ENCODE measurements at regions of chr6 and their contacts with region 1.

Region 1: GRCh38 chr6:37005061-37005810 is at the start of gene FGD2:
- DNase-seq: peak; percentile 75
- ATAC-seq: peak; percentile 73
- H3K4me3 Mint-ChIP-seq: peak within 1 kb of the TSS; percentile 100
- H3K27ac Mint-ChIP-seq: peak within 1 kb of the TSS; percentile 92
- H3K4me1 Mint-ChIP-seq: peaks cover 84% of the 10 kb centered on the region
- H3K27me3 Mint-ChIP-seq: no peaks in the 10 kb centered on the region
- CTCF ChIP-seq: no peak
- total RNA-seq, gene FGD2: 362 and 435 TPM in 2 replicates

Region 2: GRCh38 chr6:36594029-36594815 is 411.0 kb before region 1 on chr6 and contains the start of gene SRSF3:
- CTCF ChIA-PET with region 1: no interaction called
- POLR2A ChIA-PET with region 1: interaction called, 5 read pairs
- intact Hi-C with region 1: loop called (anchors 10 kb)
- DNase-seq: peak; percentile 87
- ATAC-seq: peak; percentile 91
- H3K4me3 Mint-ChIP-seq: peak within 1 kb of the TSS; percentile 96
- H3K27ac Mint-ChIP-seq: peak within 1 kb of the TSS; percentile 99
- H3K4me1 Mint-ChIP-seq: peaks cover 51% of the 10 kb centered on the region
- H3K27me3 Mint-ChIP-seq: no peaks in the 10 kb centered on the region
- CTCF ChIP-seq: no peak
- total RNA-seq, gene SRSF3: 421 and 494 TPM in 2 replicates

Region 3: DNA sequence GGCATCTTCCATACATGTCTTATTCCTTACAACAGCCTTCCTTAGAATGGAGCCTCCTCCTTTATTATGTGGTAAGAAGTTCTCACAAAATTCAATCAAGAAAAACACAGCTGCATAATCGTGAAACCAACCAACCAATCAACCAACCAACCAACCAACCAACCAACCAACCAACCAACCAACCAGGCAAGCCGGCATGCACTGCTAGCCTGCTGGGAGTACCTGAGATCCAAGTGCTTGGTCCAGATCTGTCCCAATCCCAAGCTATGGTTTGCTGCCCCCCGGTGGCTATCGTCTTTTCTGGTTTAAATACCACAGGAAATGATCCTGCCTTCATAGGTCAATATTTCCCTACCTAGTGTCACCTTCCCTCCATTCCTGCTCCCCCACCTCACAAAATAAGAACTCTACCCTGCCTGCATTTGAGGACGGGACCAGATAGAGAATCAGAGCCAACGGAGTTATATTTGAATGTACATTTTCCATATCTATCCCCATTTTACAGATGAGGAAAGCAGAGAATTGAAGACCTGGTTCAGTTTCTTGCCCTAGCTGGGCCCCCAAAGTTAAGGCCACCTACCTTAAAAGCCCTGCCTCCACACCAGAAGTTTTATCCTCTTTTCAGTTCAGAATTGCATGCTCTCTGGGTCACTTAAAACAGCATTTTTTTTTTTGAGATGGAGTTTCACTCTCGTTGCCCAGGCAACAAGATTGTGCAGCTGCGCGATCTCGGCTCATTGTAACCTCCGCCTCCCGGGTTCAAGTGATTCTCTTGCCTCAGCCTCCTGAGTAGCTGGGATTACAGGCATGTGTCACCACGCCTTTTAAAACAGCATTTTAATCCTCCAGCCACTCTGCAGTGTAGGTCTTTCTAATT is 280.5 kb before region 1 on chr6:
- CTCF ChIA-PET with region 1: no interaction called
- POLR2A ChIA-PET with region 1: no interaction called
- intact Hi-C with region 1: no loop called
- DNase-seq: no peak
- ATAC-seq: peak; percentile 14
- H3K4me3 Mint-ChIP-seq: no peak overlapping the region
- H3K27ac Mint-ChIP-seq: peak overlapping the region; percentile 25
- H3K4me1 Mint-ChIP-seq: peaks cover 57% of the 10 kb centered on the region
- H3K27me3 Mint-ChIP-seq: no peaks in the 10 kb centered on the region
- CTCF ChIP-seq: no peak

Region 4: DNA sequence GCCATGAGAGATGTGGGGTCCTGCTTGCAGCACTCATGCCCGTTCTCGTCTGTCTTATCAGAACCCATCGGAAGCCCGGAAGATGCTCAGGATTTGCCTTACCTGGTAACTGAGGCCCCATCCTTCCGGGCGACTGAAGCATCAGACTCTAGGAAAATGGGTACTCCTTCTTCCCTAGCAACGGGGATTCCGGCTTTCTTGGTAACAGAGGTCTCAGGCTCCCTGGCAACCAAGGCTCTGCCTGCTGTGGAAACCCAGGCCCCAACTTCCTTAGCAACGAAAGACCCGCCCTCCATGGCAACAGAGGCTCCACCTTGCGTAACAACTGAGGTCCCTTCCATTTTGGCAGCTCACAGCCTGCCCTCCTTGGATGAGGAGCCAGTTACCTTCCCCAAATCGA is 42.4 kb before region 1 on chr6:
- CTCF ChIA-PET with region 1: interaction called, 5 read pairs
- POLR2A ChIA-PET with region 1: interaction called, 4 read pairs
- intact Hi-C with region 1: loop called (anchors 1 kb)
- DNase-seq: peak; percentile 74
- ATAC-seq: peak; percentile 80
- H3K4me3 Mint-ChIP-seq: peak overlapping the region; percentile 67
- H3K27ac Mint-ChIP-seq: peak overlapping the region; percentile 88
- H3K4me1 Mint-ChIP-seq: peaks cover 30% of the 10 kb centered on the region
- H3K27me3 Mint-ChIP-seq: no peaks in the 10 kb centered on the region
- CTCF ChIP-seq: no peak

Region 5: GRCh38 chr6:37018198-37019064 is 13.2 kb after region 1 on chr6:
- CTCF ChIA-PET with region 1: interaction called, 74 read pairs
- POLR2A ChIA-PET with region 1: interaction called, 67 read pairs
- intact Hi-C with region 1: loop called (anchors 1 kb)
- DNase-seq: peak; percentile 72
- ATAC-seq: peak; percentile 95
- H3K4me3 Mint-ChIP-seq: no peak overlapping the region
- H3K27ac Mint-ChIP-seq: peak overlapping the region; percentile 73
- H3K4me1 Mint-ChIP-seq: peaks cover 31% of the 10 kb centered on the region
- H3K27me3 Mint-ChIP-seq: no peaks in the 10 kb centered on the region
- CTCF ChIP-seq: peak; percentile 83

Region 6: DNA sequence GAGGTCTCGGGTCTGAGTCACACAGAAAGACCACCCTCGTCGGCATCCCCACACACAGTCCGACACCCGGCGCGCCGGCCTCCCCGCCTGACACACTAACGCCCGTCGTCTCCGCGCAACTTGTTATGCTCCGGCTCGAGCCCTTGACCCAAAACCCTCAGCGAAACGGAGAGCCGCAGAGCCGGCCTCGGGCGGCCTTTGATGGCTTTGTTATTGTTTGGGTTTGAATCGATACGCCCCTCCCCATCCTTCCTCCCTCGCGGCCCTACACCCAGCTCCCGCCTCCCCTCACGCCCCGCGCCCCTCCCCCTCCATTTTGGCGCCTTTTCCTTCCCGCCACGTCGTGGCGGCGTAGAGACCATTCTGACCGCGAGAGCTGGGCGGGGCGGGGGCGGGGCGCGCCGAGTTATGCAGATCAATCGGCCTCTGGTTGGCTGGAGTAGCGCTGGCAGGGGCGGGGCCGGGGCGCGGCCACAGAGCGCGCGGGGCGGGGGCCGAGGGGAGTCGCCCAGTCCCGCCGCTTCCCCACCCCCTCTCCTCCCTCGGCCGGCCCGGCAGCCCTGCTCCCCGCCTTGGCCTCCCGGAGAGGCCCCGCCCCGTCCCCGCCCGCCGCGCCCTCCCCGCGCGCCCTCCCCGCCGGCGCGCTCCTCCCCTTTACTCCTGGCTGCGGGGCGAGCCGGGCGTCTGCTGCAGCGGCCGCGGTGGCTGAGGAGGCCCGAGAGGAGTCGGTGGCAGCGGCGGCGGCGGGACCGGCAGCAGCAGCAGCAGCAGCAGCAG is 164.4 kb after region 1 on chr6 and contains the start of gene PIM1:
- CTCF ChIA-PET with region 1: interaction called, 4 read pairs
- POLR2A ChIA-PET with region 1: interaction called, 48 read pairs
- intact Hi-C with region 1: no loop called
- DNase-seq: peak; percentile 88
- ATAC-seq: peak; percentile 84
- H3K4me3 Mint-ChIP-seq: peak within 1 kb of the TSS; percentile 95
- H3K27ac Mint-ChIP-seq: peak within 1 kb of the TSS; percentile 96
- H3K4me1 Mint-ChIP-seq: peaks cover 47% of the 10 kb centered on the region
- H3K27me3 Mint-ChIP-seq: no peaks in the 10 kb centered on the region
- CTCF ChIP-seq: no peak
- total RNA-seq, gene PIM1: 272 and 283 TPM in 2 replicates

Region 7: GRCh38 chr6:37298958-37299357 is 293.7 kb after region 1 on chr6:
- CTCF ChIA-PET with region 1: no interaction called
- POLR2A ChIA-PET with region 1: no interaction called
- intact Hi-C with region 1: no loop called
- DNase-seq: no peak
- ATAC-seq: no peak
- H3K4me3 Mint-ChIP-seq: no peak overlapping the region
- H3K27ac Mint-ChIP-seq: no peak overlapping the region
- H3K4me1 Mint-ChIP-seq: peaks cover 8% of the 10 kb centered on the region
- H3K27me3 Mint-ChIP-seq: no peaks in the 10 kb centered on the region
- CTCF ChIP-seq: no peak

Region 8: DNA sequence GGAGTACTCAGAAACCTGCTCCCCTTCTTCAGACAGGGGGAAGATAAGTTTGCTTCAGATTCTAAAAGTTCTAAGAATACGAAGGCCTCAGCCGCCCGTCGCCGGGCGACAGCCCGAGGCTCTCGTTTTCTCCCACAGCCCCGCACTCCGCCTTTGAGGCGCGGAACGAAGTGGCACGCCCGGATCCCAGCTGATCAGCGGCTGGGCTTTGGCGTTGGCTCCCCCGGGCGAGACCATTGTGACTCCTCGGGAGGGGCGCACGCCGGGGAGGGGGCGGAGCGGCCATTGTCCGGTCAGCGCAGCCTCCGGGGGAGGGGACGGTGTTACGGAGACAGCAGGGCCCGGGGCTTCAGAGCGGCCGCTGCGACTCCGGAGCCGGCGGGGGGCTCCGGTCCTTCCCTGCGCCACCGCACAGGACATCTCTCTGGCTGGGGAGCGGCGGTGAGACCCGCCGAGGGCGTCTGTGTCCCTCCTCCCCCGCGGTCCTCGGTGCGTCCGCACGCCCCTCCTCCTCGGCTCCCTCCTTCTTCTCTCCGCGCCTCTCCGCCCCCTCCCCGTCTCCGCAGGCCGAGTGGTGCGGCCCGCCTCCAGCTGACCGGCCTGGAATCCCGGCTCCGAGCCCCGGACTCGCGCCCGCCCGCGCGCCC is 814.1 kb after region 1 on chr6 and contains the start of gene ZFAND3:
- CTCF ChIA-PET with region 1: no interaction called
- POLR2A ChIA-PET with region 1: interaction called, 8 read pairs
- intact Hi-C with region 1: loop called (anchors 5 kb)
- DNase-seq: peak; percentile 95
- ATAC-seq: peak; percentile 81
- H3K4me3 Mint-ChIP-seq: peak within 1 kb of the TSS; percentile 98
- H3K27ac Mint-ChIP-seq: peak within 1 kb of the TSS; percentile 99
- H3K4me1 Mint-ChIP-seq: peaks cover 51% of the 10 kb centered on the region
- H3K27me3 Mint-ChIP-seq: no peaks in the 10 kb centered on the region
- CTCF ChIP-seq: no peak
- total RNA-seq, gene ZFAND3: 56.3 and 60.1 TPM in 2 replicates